Sigmoid colon (tissue), 7 donors: ENCODE measurements at regions of chr12 and their contacts with region 1.

Region 1: DNA sequence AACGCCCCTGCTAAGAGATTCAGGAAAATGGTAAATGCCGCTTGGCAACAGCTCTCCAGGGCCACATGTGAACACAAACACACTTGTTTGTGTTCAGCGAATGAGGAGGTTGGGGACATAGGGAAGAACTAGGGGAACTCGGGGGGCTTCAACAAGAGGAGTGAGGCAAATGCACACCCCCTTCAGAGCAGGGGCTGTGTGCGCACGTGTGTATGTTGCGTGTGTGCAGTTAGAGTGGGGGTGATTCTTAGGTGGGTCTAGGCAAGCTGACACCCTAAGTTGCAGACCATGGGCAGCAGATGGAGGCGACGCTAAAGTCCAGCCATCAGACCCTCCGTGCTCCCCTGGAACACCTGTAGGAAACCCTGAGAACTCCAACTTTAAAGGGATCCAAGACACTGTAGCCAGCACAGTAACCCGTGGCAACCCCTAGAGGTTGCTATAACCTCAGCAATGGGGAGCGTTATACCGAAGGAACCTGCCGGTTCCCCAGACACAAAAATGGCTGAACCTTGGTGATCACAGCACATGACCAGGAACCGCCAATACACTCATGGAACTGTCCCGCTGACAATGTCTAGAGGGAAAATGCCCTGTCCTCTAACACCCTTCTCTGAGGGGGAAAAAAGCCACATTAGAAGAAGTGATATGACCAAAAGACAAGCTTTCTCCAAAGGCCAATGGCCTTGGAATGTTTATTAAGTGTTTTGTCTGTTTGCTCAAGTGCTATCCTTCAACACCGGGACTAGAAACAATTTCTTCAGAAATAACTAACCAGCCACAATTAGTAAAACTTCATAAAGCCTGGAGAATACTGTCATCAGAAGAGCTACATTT is 86.5 kb upstream of the CEP83 start:
- DNase-seq: no peak
- H3K4me3 ChIP-seq: no peak overlapping the region
- H3K27ac ChIP-seq: no peak overlapping the region
- H3K4me1 ChIP-seq: no peaks in the 10 kb centered on the region
- H3K27me3 ChIP-seq: no peaks in the 10 kb centered on the region
- CTCF ChIP-seq: peak; percentile 62 to 70 (median 67)
- EP300 ChIP-seq: no peak
- POLR2A ChIP-seq: no peak

Region 2: DNA sequence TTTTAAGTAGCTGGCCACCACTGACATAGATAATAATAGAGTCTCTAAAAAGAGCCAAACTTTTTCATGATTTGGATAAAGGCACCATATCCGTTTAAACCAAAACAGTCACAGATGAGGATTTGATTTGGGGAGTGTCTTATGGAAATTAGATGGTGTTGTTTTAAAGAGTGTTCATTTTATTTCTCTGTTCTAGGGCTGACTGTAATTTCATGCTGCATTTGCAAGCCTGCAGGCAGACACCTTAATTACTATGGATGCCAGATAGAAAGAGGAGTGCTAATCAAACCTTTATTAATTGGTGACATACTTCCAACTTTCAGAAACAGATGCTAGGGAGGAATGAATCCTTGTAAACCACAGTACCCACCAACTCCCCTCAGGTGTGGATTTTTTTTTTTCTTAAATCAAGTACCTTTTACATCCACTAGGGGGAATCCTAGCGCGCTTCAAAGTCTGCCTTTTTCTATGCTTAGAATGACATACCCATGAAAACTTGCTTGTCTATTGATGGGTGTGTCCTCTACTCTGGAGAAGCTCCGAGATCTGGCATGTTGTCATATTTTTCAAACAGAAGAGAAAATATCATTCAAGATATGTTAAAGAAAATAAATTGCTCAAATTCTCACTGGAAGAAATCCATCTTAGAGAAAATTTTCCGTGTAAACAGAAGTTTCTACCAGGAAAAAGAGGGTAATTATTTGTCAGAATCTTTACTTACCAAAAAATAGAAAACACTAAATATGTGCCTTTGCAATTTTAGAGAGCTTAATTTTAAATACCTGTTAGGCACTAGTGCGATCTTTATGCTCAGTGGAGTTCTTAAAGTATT is 412.0 kb before region 1 on chr12:
- intact Hi-C with region 1: no loop called
- DNase-seq: no peak
- H3K4me3 ChIP-seq: no peak overlapping the region
- H3K27ac ChIP-seq: no peak overlapping the region
- H3K4me1 ChIP-seq: no peaks in the 10 kb centered on the region
- H3K27me3 ChIP-seq: no peaks in the 10 kb centered on the region
- CTCF ChIP-seq: peak; percentile 34 to 76 (median 58)
- EP300 ChIP-seq: no peak
- POLR2A ChIP-seq: no peak

Region 3: GRCh38 chr12:94459728-94460615 is 86.2 kb before region 1 on chr12 and contains the start of gene CEP83:
- intact Hi-C with region 1: no loop called
- DNase-seq: peak; percentile 98
- H3K4me3 ChIP-seq: peak within 1 kb of the TSS; percentile 73 to 77 (median 76)
- H3K27ac ChIP-seq: peak within 1 kb of the TSS; percentile 91 to 95 (median 94)
- H3K4me1 ChIP-seq: peaks cover 0 to 23% (median 17%) of the 10 kb centered on the region in 4 donors
- H3K27me3 ChIP-seq: no peaks in the 10 kb centered on the region
- CTCF ChIP-seq: no peak
- EP300 ChIP-seq: no peak
- POLR2A ChIP-seq: peak; percentile 61 to 77
- total RNA-seq, gene CEP83: 7.9 to 23.5 (median 10.4) TPM

Region 4: DNA sequence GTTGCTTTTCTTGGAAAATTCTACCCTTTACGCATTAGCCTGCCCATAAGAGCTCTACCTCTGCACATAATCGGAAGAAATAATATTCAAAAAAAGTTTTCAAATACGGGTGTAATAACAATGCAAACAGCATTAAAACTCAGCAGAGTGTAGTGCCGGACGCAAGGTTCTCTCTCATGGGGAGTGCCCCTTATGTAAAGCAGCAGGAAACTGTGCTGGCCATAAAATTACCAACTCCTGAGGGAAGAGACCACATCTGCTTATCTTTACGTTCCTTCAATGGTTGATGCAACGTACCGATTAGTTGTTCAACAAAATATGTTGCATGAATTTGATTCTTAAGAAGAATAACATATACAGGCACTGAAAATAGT is 222.9 kb after region 1 on chr12:
- intact Hi-C with region 1: loop called (anchors 5 kb)
- DNase-seq: no peak
- H3K4me3 ChIP-seq: no peak overlapping the region
- H3K27ac ChIP-seq: no peak overlapping the region
- H3K4me1 ChIP-seq: peaks cover 0 to 24% (median 9%) of the 10 kb centered on the region in 4 donors
- H3K27me3 ChIP-seq: no peaks in the 10 kb centered on the region
- CTCF ChIP-seq: no peak
- EP300 ChIP-seq: no peak
- POLR2A ChIP-seq: no peak

Region 5: DNA sequence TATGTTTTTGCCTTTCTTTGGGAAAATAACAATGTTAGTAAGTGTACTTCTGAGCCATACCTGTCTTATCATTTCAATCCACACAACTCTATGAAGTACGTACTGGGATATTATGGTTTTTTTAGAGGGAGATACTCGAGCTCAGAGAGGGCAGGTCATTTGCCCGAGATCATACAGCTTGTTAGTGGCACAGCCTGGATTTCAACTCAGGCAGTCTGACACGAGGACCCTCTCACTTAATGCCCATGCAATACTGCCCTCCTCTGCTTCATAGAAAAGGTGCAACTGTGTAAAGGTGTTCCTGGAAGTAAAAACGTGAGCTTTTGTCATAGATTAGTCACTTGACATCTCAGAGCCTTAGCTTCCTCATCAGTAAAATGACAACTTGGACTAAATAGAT is 329.4 kb after region 1 on chr12:
- intact Hi-C with region 1: loop called (anchors 10 kb)
- DNase-seq: no peak
- H3K4me3 ChIP-seq: no peak overlapping the region
- H3K27ac ChIP-seq: peak overlapping the region in 1 of 4 donors; percentile 64
- H3K4me1 ChIP-seq: peaks cover 0 to 28% (median 24%) of the 10 kb centered on the region in 4 donors
- H3K27me3 ChIP-seq: peaks cover 7 to 38% (median 28%) of the 10 kb centered on the region in 3 donors
- CTCF ChIP-seq: no peak
- EP300 ChIP-seq: no peak
- POLR2A ChIP-seq: no peak

Region 6: DNA sequence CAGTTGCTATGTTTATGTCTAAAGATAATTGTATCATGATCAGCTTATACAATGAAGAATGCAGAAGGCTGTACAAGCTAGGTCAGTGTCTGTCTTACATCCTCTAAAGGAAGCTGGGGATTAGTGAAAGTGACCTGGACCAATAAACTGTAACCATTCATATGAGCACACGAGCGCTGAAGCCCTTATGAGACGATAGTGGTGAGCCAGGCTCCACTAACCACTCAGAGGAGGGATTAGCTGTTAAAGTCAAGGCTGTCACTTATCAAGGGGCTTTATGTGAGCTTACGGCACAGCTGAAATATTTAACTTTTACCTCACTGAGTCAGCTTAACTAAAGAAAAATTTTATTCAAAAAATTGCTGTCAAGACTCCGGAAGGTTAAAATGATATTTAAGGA is 427.1 kb after region 1 on chr12:
- intact Hi-C with region 1: loop called (anchors 10 kb)
- DNase-seq: no peak
- H3K4me3 ChIP-seq: no peak overlapping the region
- H3K27ac ChIP-seq: no peak overlapping the region
- H3K4me1 ChIP-seq: no peaks in the 10 kb centered on the region
- H3K27me3 ChIP-seq: no peaks in the 10 kb centered on the region
- CTCF ChIP-seq: no peak
- EP300 ChIP-seq: no peak
- POLR2A ChIP-seq: no peak

Region 7: DNA sequence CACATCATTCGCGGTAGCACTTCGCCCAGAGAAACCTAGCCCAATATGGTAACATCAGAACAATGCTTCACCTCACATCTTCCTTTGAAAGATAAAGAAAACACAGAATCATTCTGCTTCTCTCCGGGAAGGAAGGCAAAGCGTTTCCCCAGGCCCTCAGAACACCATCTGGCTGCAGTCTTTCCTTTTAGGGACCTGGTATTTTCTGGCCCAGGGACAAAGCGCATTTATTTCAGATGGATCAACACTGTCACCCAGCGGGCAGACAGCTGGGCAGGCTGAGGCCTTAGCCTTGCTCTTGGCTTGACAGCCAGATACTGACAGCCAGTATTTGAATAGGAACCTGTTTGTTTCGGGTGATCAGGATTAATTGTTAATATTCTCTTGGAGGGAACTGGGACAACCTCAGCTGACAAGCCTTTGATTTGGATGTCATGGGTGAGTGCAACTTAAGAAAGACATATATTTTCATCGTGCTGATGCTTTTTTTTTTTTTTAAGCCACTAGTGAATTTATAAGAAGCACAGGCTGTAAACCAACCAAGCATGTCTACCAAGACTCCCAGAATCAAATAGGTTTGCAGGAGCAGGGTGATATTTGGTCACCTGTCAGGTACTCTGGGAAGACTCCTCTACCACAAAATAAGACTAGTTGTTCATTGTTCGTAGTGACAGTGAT is 790.4 kb after region 1 on chr12:
- intact Hi-C with region 1: loop called (anchors 10 kb)
- DNase-seq: peak; percentile 89
- H3K4me3 ChIP-seq: peak overlapping the region in 2 of 4 donors; percentile 8 to 24
- H3K27ac ChIP-seq: peak overlapping the region; percentile 81 to 87 (median 84)
- H3K4me1 ChIP-seq: peaks cover 0 to 40% (median 27%) of the 10 kb centered on the region in 4 donors
- H3K27me3 ChIP-seq: no peaks in the 10 kb centered on the region
- CTCF ChIP-seq: peak; percentile 45 to 76 (median 61)
- EP300 ChIP-seq: no peak
- POLR2A ChIP-seq: no peak